ENCODE measurements at regions of chr14 and their contacts with region 1.

Region 1: GRCh38 chr14:24215495-24216344 is at the start of gene MDP1:
- DNase-seq: peak; percentile 85
- H3K4me3 Mint-ChIP-seq: peak within 1 kb of the TSS; percentile 90
- H3K27ac Mint-ChIP-seq: peak within 1 kb of the TSS; percentile 96
- H3K4me1 Mint-ChIP-seq: peaks cover 43% of the 10 kb centered on the region
- H3K27me3 Mint-ChIP-seq: no peaks in the 10 kb centered on the region
- total RNA-seq, gene MDP1: 11.6 and 12.9 TPM in 2 replicates

Region 2: DNA sequence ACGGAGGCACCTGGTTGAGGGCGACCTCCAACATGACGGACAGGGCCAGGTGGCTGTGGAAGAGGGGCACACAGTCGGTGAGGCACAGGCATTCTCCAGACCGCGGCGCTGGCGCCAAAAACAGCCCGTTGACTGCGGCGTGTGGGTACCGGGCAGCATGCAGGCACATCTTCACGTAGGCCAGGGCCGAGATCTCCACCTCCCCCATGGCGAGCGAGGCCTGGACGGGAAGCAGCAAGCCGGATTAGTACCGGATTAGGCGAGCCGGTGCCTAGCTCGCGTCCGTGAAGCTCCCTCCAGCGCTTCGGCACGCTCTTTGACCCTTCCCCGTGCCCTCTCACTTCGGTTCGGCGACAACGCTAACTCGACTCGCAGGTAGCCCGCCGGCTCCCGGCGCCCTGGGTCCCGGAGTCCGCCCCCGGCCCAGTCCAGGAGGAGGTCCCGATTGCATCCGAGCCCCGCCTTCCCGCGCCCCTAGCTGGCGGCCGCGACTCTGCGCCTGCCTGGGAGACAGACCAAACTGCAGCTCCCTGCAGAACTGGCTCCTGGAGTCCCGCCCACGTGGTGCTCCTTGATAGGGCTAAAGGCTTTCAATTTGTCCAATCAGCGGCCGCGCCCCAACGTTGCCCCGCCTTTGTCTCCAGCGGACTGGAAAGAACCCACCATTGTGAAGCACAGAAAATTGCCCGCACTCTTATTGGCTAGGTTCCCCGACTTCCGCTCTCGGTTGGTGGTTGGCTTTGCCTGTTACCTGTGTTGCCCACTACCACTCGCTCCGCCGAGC is 74.4 kb before region 1 on chr14 and contains the start of gene EMC9:
- intact Hi-C with region 1: loop called (anchors 1 kb)
- DNase-seq: peak; percentile 100
- H3K4me3 Mint-ChIP-seq: peak within 1 kb of the TSS; percentile 98
- H3K27ac Mint-ChIP-seq: peak within 1 kb of the TSS; percentile 92
- H3K4me1 Mint-ChIP-seq: peaks cover 80% of the 10 kb centered on the region
- H3K27me3 Mint-ChIP-seq: no peaks in the 10 kb centered on the region
- total RNA-seq, gene EMC9: 22.9 and 28.3 TPM in 2 replicates

Region 3: DNA sequence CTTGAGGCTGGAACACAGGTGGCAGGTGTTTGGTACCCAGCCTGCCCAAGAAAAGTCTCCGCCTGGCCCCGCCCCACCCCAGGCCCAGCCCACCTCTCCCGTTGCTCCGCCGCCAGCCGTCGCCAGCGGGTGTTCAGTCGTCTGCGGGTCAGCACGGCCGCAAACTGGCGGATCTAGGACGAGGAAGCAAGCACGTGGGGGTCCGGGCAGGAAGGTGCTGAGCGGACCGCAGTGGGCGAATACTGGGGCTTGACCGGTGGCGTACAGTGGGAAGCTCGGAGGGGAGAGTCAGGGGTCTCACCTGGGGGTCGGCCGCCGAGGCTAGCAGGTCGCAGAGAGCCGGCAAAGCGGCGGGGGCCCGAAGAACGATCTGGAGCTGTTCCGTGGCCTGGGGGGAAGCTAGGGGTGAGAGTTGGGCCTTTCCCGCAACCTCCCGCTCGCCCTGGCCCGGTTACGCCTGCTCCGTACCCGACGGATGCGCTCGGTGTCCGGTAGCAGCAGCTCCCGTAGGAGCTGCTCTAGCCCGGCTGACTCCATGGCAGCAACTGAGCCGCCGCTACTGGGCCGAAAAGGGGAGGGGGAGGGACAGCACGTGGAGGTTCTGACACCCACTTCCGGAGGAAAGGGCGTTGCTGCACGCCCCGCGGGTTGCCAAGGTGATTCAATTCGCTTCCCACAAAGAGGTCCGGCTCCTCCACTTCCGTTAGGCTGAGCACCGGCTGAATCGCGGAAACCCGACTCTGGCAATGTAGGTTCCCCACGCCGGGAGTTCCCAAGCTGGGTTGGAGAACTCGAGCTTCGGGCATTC is 27.3 kb before region 1 on chr14 and contains the start of gene IPO4:
- intact Hi-C with region 1: loop called (anchors 1 kb)
- DNase-seq: peak; percentile 93
- H3K4me3 Mint-ChIP-seq: peak within 1 kb of the TSS; percentile 91
- H3K27ac Mint-ChIP-seq: peak within 1 kb of the TSS; percentile 86
- H3K4me1 Mint-ChIP-seq: peaks cover 42% of the 10 kb centered on the region
- H3K27me3 Mint-ChIP-seq: no peaks in the 10 kb centered on the region
- total RNA-seq, gene IPO4: 106 and 107 TPM in 2 replicates

Region 4: GRCh38 chr14:24195191-24196070 is 20.3 kb before region 1 on chr14 and contains the start of gene TM9SF1:
- intact Hi-C with region 1: loop called (anchors 1 kb)
- DNase-seq: peak; percentile 85
- H3K4me3 Mint-ChIP-seq: peak within 1 kb of the TSS; percentile 97
- H3K27ac Mint-ChIP-seq: peak within 1 kb of the TSS; percentile 96
- H3K4me1 Mint-ChIP-seq: peaks cover 61% of the 10 kb centered on the region
- H3K27me3 Mint-ChIP-seq: no peaks in the 10 kb centered on the region
- total RNA-seq, gene TM9SF1: 34.5 and 35.3 TPM in 2 replicates

Region 5: GRCh38 chr14:24232121-24232644 is 16.5 kb after region 1 on chr14 and contains the start of gene NEDD8:
- intact Hi-C with region 1: loop called (anchors 1 kb)
- DNase-seq: peak; percentile 84
- H3K4me3 Mint-ChIP-seq: peak within 1 kb of the TSS; percentile 93
- H3K27ac Mint-ChIP-seq: peak within 1 kb of the TSS; percentile 91
- H3K4me1 Mint-ChIP-seq: peaks cover 50% of the 10 kb centered on the region
- H3K27me3 Mint-ChIP-seq: no peaks in the 10 kb centered on the region
- total RNA-seq, gene NEDD8: 177 and 185 TPM in 2 replicates

Region 6: GRCh38 chr14:24271134-24271833 is 55.6 kb after region 1 on chr14 and contains the start of gene RABGGTA:
- intact Hi-C with region 1: loop called (anchors 1 kb)
- DNase-seq: peak; percentile 87
- H3K4me3 Mint-ChIP-seq: peak within 1 kb of the TSS; percentile 93
- H3K27ac Mint-ChIP-seq: peak within 1 kb of the TSS; percentile 96
- H3K4me1 Mint-ChIP-seq: peaks cover 52% of the 10 kb centered on the region
- H3K27me3 Mint-ChIP-seq: no peaks in the 10 kb centered on the region
- total RNA-seq, gene RABGGTA: 52.2 and 54.4 TPM in 2 replicates

Region 7: GRCh38 chr14:24310646-24311604 is 95.2 kb after region 1 on chr14 and contains the start of gene LTB4R:
- intact Hi-C with region 1: loop called (anchors 1 kb)
- DNase-seq: peak; percentile 59
- H3K4me3 Mint-ChIP-seq: peak within 1 kb of the TSS; percentile 85
- H3K27ac Mint-ChIP-seq: peak within 1 kb of the TSS; percentile 84
- H3K4me1 Mint-ChIP-seq: peaks cover 81% of the 10 kb centered on the region
- H3K27me3 Mint-ChIP-seq: peaks cover 1% of the 10 kb centered on the region
- total RNA-seq, gene LTB4R: 10.1 and 11.1 TPM in 2 replicates